Motor neuron (in vitro differentiated cells): ENCODE measurements at regions of chr1 and their contacts with region 1.

Region 1: DNA sequence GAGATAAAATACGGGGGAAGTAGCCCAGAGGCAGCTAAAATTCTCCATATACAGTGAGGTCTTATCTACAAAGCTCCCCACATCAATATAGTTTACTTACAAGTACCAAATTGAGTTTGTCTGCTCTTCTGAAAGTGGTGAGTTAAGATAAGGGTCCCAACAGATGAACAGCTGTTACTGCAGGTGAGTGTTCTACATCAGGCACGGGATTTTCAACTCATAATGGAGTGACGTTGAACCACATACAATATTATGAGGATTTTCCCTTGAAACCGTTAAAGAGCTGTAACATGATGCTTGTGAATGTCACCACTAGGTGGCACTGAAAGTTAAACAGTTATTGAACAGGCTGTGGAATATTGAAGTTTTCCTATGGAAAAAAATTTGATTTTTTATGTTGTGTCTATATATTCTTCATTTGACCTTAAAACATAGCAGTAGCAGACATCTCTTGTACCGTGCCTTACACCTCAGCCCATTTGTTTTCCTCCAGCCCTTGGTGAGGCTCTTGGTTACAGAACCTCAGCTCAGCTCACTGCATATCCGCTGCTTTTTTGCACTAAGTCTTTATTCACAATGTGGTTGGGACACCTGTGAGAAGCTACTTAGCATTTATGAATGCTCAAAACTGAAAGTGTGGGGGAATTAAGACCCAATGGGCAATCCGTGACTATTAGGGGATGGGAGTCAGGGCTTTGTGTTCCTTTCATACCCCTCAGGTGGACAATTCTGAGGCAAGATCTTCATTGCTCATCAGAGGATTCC is 23.2 kb downstream of the CD1D start:
- ATAC-seq: peak; percentile 72 to 98 (median 84)
- H3K4me3 ChIP-seq: no peak overlapping the region
- H3K27ac ChIP-seq: no peak overlapping the region
- H3K4me1 ChIP-seq: peaks cover 0 to 3% of the 10 kb centered on the region in 2 donors

Region 2: GRCh38 chr1:158285756-158286241 is 81.9 kb after region 1 on chr1:
- in situ Hi-C with region 1: no loop called
- ATAC-seq: peak in 1 of 8 experiments; percentile 17
- H3K4me3 ChIP-seq: no peak overlapping the region
- H3K27ac ChIP-seq: no peak overlapping the region
- H3K4me1 ChIP-seq: no peaks in the 10 kb centered on the region

Region 3: DNA sequence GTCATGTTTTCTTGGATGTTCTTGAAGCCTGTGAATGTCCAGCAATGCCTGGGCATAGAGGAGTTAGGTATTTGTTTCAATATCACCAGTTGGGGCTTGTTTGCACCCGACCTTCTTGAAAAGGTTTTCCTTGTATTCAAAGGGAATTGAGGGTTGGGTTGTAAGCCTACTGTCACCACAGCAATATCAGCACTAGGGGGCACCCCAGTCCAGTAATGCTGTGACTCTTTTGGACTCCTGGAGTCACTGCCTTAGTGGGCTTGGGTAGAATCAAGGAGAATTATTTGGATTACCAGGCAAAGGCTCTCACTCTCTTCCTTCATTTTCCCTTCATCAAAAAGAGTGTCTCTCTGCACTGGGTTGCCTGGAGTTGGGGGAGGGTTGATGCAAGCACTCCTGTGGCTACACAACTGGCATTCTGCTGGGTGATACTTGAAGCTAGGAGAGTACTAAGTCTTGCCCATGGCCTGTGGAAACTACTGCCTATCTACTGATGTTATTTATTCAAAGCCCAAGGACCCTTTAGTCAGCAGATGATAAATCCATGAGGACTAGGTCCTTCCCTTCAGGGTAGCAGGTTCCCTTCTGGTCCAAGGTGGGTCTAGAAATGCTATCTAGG is 302.6 kb after region 1 on chr1:
- in situ Hi-C with region 1: loop called in 1 of 9 experiments (anchors 25 kb)
- ATAC-seq: peak in 3 of 8 experiments; percentile 76 to 85 (median 81)
- H3K4me3 ChIP-seq: no peak overlapping the region
- H3K27ac ChIP-seq: no peak overlapping the region
- H3K4me1 ChIP-seq: no peaks in the 10 kb centered on the region